ENCODE measurements at regions of chr3 and their contacts with region 1.

Region 1: DNA sequence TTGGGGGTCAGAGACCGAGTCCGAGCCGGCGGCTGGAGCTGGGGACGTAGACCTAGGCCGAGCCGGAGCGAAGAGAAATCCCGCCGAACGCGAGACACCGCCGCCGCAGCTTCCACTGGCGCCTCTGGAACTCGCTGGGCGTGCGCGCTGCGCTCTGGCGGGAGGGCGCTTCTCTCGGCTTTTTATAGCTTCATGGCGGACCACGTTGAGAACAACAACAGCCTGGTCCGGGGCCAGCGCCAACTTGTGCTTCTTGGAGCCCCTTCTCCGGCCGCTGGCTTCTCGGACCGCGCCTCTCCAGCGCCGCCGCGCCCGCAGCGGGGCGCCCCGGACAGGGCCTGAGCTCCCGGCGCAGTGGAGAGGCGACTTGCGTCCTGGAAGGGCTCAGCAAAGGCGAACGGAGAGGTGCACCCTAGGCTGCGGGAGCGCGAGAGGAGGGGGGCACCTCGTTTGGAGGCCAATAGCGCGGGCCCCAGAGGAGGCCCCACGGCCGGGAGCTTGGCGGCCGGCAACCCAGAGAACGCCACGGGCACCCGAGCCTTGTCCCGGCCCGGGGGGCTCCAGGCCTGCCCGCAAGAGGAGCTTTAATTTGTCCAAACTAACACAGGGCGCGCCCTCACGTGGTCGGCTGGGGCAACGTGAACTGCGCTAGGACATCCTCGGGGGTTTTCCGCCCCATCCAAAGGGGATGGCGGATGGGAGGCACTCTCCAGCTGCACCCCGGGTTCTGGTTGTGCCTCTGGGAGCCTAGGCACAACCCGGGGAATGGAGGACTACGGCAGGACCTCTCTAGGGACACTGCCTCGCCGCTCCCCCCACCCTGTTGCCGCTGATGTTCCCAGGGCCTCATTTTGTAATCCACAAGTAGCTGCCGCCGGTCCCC is 37.7 kb downstream of the HMCES start:
- DNase-seq: peak; percentile 90
- H3K4me3 Mint-ChIP-seq: peak overlapping the region; percentile 93
- H3K27ac Mint-ChIP-seq: peak overlapping the region; percentile 89
- H3K4me1 Mint-ChIP-seq: peaks cover 26% of the 10 kb centered on the region
- H3K27me3 Mint-ChIP-seq: no peaks in the 10 kb centered on the region

Region 2: GRCh38 chr3:129144786-129145185 is 171.6 kb before region 1 on chr3:
- CTCF ChIA-PET with region 1: no interaction called
- POLR2A ChIA-PET with region 1: no interaction called
- intact Hi-C with region 1: no loop called
- DNase-seq: no peak
- H3K4me3 Mint-ChIP-seq: no peak overlapping the region
- H3K27ac Mint-ChIP-seq: no peak overlapping the region
- H3K4me1 Mint-ChIP-seq: no peaks in the 10 kb centered on the region
- H3K27me3 Mint-ChIP-seq: no peaks in the 10 kb centered on the region

Region 3: DNA sequence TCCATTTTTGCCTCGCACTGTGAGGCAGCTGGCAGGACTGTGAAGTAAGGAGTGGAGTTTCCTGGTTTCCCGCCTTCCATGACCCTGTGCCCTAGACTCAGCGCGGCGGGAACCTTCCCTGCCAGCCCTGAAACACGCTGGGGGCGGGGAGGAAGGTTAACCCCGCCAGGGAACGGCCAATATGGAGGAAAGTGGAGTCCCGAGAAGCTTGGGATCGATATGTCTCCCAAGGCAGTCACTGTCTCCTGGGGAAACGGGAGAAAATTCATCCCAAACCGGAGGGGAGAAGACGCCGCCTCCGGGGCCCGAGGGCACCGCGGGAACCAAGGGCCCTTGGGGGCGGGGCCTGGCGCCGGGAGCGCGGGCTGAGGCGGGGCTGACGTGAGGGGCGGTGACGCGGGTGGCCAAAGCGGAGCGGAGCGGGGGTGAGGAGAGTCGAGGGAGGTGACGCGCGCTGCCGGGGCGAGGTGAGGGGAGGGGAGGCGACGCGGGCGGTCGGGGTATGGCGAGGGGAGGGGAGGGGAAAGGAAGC is 37.9 kb before region 1 on chr3 and contains the start of gene HMCES:
- CTCF ChIA-PET with region 1: interaction called, 16 read pairs
- POLR2A ChIA-PET with region 1: interaction called, 26 read pairs
- intact Hi-C with region 1: loop called (anchors 1 kb)
- DNase-seq: peak; percentile 97
- H3K4me3 Mint-ChIP-seq: peak within 1 kb of the TSS; percentile 89
- H3K27ac Mint-ChIP-seq: peak within 1 kb of the TSS; percentile 90
- H3K4me1 Mint-ChIP-seq: peaks cover 52% of the 10 kb centered on the region
- H3K27me3 Mint-ChIP-seq: no peaks in the 10 kb centered on the region
- total RNA-seq, gene HMCES: 58.4 to 61.5 TPM

Region 4: DNA sequence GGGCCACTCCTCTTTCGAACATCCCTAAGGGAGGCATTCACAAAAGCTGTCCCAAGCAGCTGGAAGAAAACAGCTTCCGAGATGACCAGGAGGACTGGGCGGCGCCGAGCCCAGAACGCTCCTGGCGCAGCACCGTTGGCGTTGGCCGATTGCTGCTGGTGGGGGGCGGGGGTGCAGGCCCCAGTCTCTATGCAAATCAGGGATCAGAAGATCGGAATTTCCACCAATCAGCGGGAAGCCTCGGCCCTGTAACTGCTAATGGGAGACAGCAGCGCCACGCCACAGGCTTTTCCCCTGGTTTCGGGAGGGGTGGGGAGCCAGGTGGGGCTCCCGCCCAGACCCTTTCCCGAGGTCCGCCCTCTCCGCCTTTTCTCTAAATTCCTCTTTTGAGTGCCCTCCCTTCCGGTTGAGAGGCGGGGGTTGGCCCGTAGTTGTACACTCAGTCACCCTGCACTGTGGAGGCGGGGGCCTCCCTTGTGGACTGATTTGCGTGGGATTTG is 10.7 kb before region 1 on chr3:
- CTCF ChIA-PET with region 1: interaction called, 11 read pairs
- POLR2A ChIA-PET with region 1: interaction called, 11 read pairs
- intact Hi-C with region 1: no loop called
- DNase-seq: peak; percentile 59
- H3K4me3 Mint-ChIP-seq: no peak overlapping the region
- H3K27ac Mint-ChIP-seq: peak overlapping the region; percentile 4
- H3K4me1 Mint-ChIP-seq: peaks cover 32% of the 10 kb centered on the region
- H3K27me3 Mint-ChIP-seq: no peaks in the 10 kb centered on the region